Lower leg skin (tissue), 4 donors: ENCODE measurements at regions of chrX and their contacts with region 1.

Region 1: DNA sequence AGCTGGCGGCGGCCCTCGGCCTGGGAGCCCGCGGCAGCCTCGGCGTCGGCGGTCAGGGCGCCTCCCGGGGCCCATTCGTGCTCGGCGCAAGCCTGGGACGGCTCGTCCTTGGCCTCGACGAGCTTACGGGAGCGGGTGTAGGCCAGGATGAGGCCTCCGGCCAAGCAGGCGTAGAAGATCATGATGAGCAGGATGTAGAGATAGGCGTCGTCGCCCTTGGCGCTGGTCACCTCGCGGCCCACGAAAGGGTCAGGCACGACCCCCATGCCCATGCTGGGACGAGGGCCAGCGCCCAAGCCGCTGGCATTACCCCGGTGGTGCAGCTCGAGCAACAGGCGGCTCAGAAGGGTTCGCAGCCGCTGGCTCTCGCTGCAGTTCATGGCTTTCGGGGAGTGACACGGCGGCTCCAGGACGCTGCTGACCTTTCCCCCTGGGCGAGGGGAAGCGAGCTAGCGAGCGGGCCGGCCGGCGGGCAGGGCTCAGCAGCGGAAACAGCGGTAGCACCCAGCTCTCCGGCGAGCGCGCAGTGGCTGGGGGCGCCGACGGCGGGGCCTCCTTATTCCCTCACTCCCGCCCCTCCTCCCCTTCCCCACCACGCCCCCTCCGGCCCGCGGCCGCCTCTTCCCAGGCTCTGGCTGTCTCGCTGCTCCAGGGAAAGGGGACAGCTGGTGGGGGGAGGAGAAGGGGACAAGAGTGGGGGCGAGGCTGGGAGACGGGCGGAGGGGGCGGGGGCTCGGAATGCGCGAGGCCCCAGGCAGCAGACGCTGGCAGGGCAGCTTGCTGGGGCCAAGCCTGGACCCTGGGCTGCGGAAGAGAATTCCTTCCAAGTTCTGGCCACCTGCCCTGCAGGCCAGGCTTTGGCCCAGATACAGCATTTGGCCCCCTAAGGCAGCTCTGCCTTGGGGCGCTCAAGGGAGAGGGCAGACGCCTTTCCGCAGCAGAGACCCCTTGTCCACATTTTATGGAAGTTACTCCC is at the start of gene KCNE5:
- DNase-seq: no peak
- H3K4me3 ChIP-seq: no peak within 1 kb of the TSS
- CTCF ChIP-seq: no peak
- POLR2A ChIP-seq: no peak
- total RNA-seq, gene KCNE5: 0.32 to 0.36 TPM in 2 of 4 donors, not detected in the others

Region 2: GRCh38 chrX:109440475-109440874 is 184.5 kb before region 1 on chrX:
- intact Hi-C with region 1: no loop called
- DNase-seq: no peak
- H3K4me3 ChIP-seq: no peak overlapping the region
- CTCF ChIP-seq: no peak
- POLR2A ChIP-seq: no peak

Region 3: GRCh38 chrX:109485470-109486340 is 139.2 kb before region 1 on chrX:
- intact Hi-C with region 1: loop called (anchors 10 kb)
- DNase-seq: peak; percentile 44 to 88
- H3K4me3 ChIP-seq: no peak overlapping the region
- CTCF ChIP-seq: peak in 1 of 3 donors; percentile 65
- POLR2A ChIP-seq: no peak

Region 4: GRCh38 chrX:109911046-109911445 is 286.1 kb after region 1 on chrX:
- intact Hi-C with region 1: no loop called
- DNase-seq: no peak
- H3K4me3 ChIP-seq: no peak overlapping the region
- CTCF ChIP-seq: no peak
- POLR2A ChIP-seq: no peak